Heart left ventricle (tissue), 16 donors: ENCODE measurements at regions of chr11 and their contacts with region 1.

Region 1: DNA sequence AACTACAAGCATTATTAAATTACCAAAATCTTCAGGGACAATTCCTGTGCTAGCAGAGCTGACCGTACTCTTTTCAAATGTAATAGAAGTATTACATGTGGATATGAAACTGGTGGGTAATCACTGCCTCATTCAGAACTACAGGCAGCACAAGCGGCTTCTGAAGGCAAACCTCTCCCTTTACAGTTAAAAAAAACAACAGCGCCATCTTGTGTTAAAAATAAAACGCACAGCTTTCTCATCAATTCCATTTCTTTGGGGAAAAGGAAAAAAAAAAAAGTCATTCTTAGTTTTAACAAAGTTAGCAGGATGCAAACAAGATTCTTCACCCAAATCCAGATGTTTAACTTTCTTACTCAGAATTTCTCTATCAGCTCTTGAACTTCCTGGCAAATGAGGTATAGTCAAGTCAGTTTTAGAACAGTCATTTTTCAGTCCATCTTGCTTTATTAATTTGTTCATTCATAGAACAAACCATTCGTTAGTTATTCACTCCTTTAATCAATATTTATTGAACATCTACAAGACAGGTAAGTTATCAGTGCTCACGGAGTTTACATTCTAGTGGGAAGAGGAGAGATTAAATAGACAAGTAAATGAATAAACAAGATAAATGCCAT is 331.8 kb upstream of the MPPED2 start:
- DNase-seq: no peak
- ATAC-seq: peak in 2 of 4 donors; percentile 26 to 57
- H3K4me3 ChIP-seq: no peak overlapping the region
- H3K27ac ChIP-seq: no peak overlapping the region
- H3K4me1 ChIP-seq: peaks cover 0 to 9% (median 0%) of the 10 kb centered on the region in 12 donors
- H3K27me3 ChIP-seq: peaks cover 0 to 3% (median 0%) of the 10 kb centered on the region in 9 donors
- CTCF ChIP-seq: peak; percentile 66 to 82 (median 75)
- POLR2A ChIP-seq: no peak

Region 2: DNA sequence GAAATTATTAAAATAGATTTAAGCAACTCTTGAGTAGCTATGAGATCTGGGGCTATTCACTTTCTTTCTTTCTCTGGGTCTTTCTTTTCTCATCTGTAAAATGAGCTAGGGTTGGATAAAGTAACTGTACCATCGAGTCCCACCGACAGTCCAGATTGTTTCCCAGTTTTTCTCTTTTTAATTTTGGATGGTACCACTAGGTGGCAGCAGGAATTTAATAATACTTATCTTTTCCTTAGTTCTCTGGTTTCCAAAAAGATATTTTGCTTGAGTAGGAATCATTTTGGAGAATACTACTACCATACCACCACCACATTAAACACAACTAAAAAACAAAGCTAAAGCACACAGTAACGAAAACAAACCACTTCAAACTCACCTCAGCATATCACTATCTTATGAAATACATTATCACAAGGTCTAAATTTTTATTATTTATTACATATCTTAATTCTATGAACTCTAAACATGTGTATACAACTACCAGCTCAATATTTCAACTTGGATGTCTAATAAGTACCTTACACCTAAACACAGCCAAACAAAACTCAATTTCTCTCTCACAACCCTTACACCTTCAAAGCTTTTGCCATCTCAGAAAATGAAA is 1485.1 kb before region 1 on chr11:
- intact Hi-C with region 1: loop called in 3 of 10 experiments (anchors 5 to 10 kb)
- DNase-seq: no peak
- ATAC-seq: no peak
- H3K4me3 ChIP-seq: no peak overlapping the region
- H3K27ac ChIP-seq: no peak overlapping the region
- H3K4me1 ChIP-seq: no peaks in the 10 kb centered on the region
- H3K27me3 ChIP-seq: no peaks in the 10 kb centered on the region
- CTCF ChIP-seq: peak; percentile 31 to 61 (median 45)
- POLR2A ChIP-seq: no peak

Region 3: GRCh38 chr11:30143098-30143705 is 774.8 kb before region 1 on chr11:
- intact Hi-C with region 1: loop called in 2 of 10 experiments (anchors 10 kb)
- DNase-seq: no peak
- ATAC-seq: peak in 1 of 4 donors; percentile 15
- H3K4me3 ChIP-seq: no peak overlapping the region
- H3K27ac ChIP-seq: no peak overlapping the region
- H3K4me1 ChIP-seq: no peaks in the 10 kb centered on the region
- H3K27me3 ChIP-seq: no peaks in the 10 kb centered on the region
- CTCF ChIP-seq: peak; percentile 52 to 80 (median 70)
- POLR2A ChIP-seq: no peak

Region 4: DNA sequence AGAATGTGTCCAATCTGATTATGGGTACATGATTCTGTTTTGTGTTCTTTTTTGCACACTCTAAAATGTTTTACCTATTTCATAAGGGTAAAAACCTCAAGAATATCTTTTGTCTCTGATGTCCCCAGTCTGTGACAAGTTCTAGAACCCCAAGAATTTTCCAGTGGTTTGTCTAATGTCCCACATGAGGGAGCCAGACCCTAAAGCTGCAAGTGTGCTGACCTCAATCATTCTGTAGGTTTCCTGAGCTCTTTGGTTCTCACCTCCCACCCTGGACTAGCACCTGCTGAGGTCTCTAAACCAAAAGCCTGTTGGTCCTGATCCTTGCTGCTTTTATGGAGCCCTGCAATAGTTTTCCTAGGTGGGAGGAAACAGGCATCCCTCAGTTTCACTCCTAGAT is 182.0 kb before region 1 on chr11:
- intact Hi-C with region 1: loop called in 3 of 10 experiments (anchors 10 kb)
- DNase-seq: no peak
- ATAC-seq: no peak
- H3K4me3 ChIP-seq: no peak overlapping the region
- H3K27ac ChIP-seq: no peak overlapping the region
- H3K4me1 ChIP-seq: no peaks in the 10 kb centered on the region
- H3K27me3 ChIP-seq: no peaks in the 10 kb centered on the region
- CTCF ChIP-seq: peak in 5 of 12 donors; percentile 5 to 28 (median 19)
- POLR2A ChIP-seq: no peak

Region 5: GRCh38 chr11:31351168-31351567 is 433.2 kb after region 1 on chr11:
- intact Hi-C with region 1: no loop called
- DNase-seq: no peak
- ATAC-seq: no peak
- H3K4me3 ChIP-seq: no peak overlapping the region
- H3K27ac ChIP-seq: no peak overlapping the region
- H3K4me1 ChIP-seq: no peaks in the 10 kb centered on the region
- H3K27me3 ChIP-seq: peaks cover 0 to 11% (median 0%) of the 10 kb centered on the region in 9 donors
- CTCF ChIP-seq: no peak
- POLR2A ChIP-seq: no peak